Sigmoid colon (tissue), 7 donors: ENCODE measurements at regions of chr10 and their contacts with region 1.

Region 1: GRCh38 chr10:5684318-5684970 is at the start of gene TASOR2:
- DNase-seq: peak; percentile 99
- H3K4me3 ChIP-seq: peak within 1 kb of the TSS; percentile 74 to 94 (median 86)
- H3K27ac ChIP-seq: peak within 1 kb of the TSS; percentile 83 to 92 (median 90)
- H3K4me1 ChIP-seq: peaks cover 0 to 25% (median 16%) of the 10 kb centered on the region in 4 donors
- H3K27me3 ChIP-seq: no peaks in the 10 kb centered on the region
- CTCF ChIP-seq: no peak
- EP300 ChIP-seq: no peak
- POLR2A ChIP-seq: no peak
- total RNA-seq, gene TASOR2: 56.6 to 66.7 (median 58.8) TPM

Region 2: GRCh38 chr10:5033061-5033770 is 651.2 kb before region 1 on chr10:
- intact Hi-C with region 1: no loop called
- DNase-seq: no peak
- H3K4me3 ChIP-seq: no peak overlapping the region
- H3K27ac ChIP-seq: no peak overlapping the region
- H3K4me1 ChIP-seq: no peaks in the 10 kb centered on the region
- H3K27me3 ChIP-seq: no peaks in the 10 kb centered on the region
- CTCF ChIP-seq: no peak
- EP300 ChIP-seq: no peak
- POLR2A ChIP-seq: no peak

Region 3: DNA sequence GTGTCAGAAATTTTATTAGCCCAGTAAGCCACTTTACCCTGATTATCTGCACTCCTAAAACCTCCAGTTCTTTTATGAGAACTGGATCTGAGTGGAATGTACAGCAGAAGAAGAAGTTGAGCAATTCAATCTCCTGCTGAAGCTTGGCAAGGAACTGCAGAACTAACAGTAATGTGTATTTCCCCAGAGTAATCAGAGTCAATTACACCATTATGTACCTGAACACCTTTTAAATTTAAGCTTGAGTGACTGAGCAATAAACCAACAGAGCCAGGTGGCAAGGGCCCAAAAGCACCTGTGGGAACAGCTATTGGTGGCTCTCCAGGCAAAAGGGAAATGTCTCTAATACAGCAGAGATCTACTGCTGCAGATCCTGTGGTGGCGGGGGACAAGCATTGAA is 640.7 kb before region 1 on chr10:
- intact Hi-C with region 1: no loop called
- DNase-seq: no peak
- H3K4me3 ChIP-seq: no peak overlapping the region
- H3K27ac ChIP-seq: no peak overlapping the region
- H3K4me1 ChIP-seq: peaks cover 0 to 13% (median 4%) of the 10 kb centered on the region in 4 donors
- H3K27me3 ChIP-seq: no peaks in the 10 kb centered on the region
- CTCF ChIP-seq: no peak
- EP300 ChIP-seq: no peak
- POLR2A ChIP-seq: no peak

Region 4: GRCh38 chr10:5446390-5446926 is 238.0 kb before region 1 on chr10:
- intact Hi-C with region 1: loop called (anchors 5 kb)
- DNase-seq: peak; percentile 97
- H3K4me3 ChIP-seq: peak overlapping the region; percentile 53 to 63 (median 60)
- H3K27ac ChIP-seq: peak overlapping the region; percentile 79 to 84 (median 82)
- H3K4me1 ChIP-seq: peaks cover 0 to 23% (median 18%) of the 10 kb centered on the region in 4 donors
- H3K27me3 ChIP-seq: no peaks in the 10 kb centered on the region
- CTCF ChIP-seq: no peak
- EP300 ChIP-seq: no peak
- POLR2A ChIP-seq: peak; percentile 89 to 94

Region 5: DNA sequence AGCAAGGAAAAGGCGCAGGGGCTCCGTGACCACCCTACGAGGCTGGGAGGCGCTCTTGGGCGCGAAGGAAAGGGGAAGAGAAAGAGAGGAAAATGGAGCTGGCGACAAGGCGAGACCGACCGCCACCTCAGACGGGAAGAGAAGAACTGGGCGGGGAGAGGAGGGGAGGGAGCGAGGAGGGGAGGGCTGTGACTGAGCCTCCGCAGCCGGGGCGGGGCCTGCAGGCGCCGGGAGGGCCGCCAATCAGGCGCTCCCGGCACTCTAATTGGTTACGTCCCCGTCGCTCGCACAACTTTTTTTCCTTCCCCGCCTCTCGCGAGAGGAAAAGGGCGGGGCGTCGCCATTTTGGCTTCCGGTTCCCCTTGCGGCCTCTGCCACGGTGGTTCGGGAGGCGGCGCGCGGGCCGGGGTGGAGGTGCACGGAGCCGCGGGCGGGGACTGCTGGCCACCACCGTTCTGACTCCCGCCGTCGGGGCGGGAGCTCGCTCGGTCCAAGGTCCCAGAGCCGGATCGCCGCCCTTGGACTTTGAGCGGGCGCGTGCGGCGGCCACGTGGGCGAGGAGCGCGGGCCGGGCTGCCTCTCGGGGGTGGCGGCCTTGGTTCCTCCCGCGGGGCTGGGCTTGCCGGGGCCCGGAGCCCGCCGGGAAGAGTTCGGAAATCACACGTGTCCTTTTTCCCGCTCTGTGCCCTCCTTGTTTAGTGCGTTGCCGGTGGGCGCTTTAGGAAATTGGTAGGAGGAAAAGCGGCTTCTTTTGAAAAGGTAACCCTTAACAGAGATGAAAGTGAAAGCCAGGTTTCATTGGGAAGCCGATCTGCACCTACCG is 129.1 kb after region 1 on chr10 and contains the start of gene GDI2:
- intact Hi-C with region 1: loop called (anchors 2 kb)
- DNase-seq: peak; percentile 98
- H3K4me3 ChIP-seq: peak within 1 kb of the TSS; percentile 78 to 96 (median 91)
- H3K27ac ChIP-seq: peak within 1 kb of the TSS; percentile 96 to 99 (median 98)
- H3K4me1 ChIP-seq: peaks cover 0 to 48% (median 40%) of the 10 kb centered on the region in 4 donors
- H3K27me3 ChIP-seq: no peaks in the 10 kb centered on the region
- CTCF ChIP-seq: no peak
- EP300 ChIP-seq: peak in 1 of 4 donors; percentile 7
- POLR2A ChIP-seq: peak; percentile 92 to 93
- total RNA-seq, gene GDI2: 178 to 208 (median 205) TPM

Region 6: GRCh38 chr10:5873515-5873995 is 189.1 kb after region 1 on chr10:
- intact Hi-C with region 1: loop called (anchors 1 kb)
- DNase-seq: peak; percentile 72
- H3K4me3 ChIP-seq: no peak overlapping the region
- H3K27ac ChIP-seq: no peak overlapping the region
- H3K4me1 ChIP-seq: no peaks in the 10 kb centered on the region
- H3K27me3 ChIP-seq: no peaks in the 10 kb centered on the region
- CTCF ChIP-seq: peak; percentile 63 to 73 (median 69)
- EP300 ChIP-seq: no peak
- POLR2A ChIP-seq: no peak

Region 7: GRCh38 chr10:5889624-5890451 is 205.4 kb after region 1 on chr10 and contains the starts of genes ANKRD16 and FBH1:
- intact Hi-C with region 1: loop called (anchors 1 kb)
- DNase-seq: peak; percentile 99
- H3K4me3 ChIP-seq: peak within 1 kb of the TSS; percentile 82 to 91 (median 84)
- H3K27ac ChIP-seq: peak within 1 kb of the TSS; percentile 81 to 94 (median 90)
- H3K4me1 ChIP-seq: peaks cover 0 to 49% (median 43%) of the 10 kb centered on the region in 4 donors
- H3K27me3 ChIP-seq: no peaks in the 10 kb centered on the region
- CTCF ChIP-seq: no peak
- EP300 ChIP-seq: no peak
- POLR2A ChIP-seq: peak; percentile 57 to 62
- total RNA-seq, gene ANKRD16: 8.6 to 11.4 (median 9.4) TPM
- total RNA-seq, gene FBH1: 68.7 to 85.9 (median 80.4) TPM